Psoas muscle (tissue), 8 donors: ENCODE measurements at regions of chr2 and their contacts with region 1.

Region 1: GRCh38 chr2:241508240-241509154 is at the start of gene STK25:
- DNase-seq: peak; percentile 99
- ATAC-seq: peak; percentile 78 to 86 (median 82)
- H3K4me3 ChIP-seq: peak within 1 kb of the TSS; percentile 85
- H3K27ac ChIP-seq: peak within 1 kb of the TSS; percentile 94
- H3K4me1 ChIP-seq: peaks cover 45% of the 10 kb centered on the region
- H3K27me3 ChIP-seq: no peaks in the 10 kb centered on the region
- CTCF ChIP-seq: no peak
- total RNA-seq, gene STK25: 268 to 382 (median 276) TPM

Region 2: DNA sequence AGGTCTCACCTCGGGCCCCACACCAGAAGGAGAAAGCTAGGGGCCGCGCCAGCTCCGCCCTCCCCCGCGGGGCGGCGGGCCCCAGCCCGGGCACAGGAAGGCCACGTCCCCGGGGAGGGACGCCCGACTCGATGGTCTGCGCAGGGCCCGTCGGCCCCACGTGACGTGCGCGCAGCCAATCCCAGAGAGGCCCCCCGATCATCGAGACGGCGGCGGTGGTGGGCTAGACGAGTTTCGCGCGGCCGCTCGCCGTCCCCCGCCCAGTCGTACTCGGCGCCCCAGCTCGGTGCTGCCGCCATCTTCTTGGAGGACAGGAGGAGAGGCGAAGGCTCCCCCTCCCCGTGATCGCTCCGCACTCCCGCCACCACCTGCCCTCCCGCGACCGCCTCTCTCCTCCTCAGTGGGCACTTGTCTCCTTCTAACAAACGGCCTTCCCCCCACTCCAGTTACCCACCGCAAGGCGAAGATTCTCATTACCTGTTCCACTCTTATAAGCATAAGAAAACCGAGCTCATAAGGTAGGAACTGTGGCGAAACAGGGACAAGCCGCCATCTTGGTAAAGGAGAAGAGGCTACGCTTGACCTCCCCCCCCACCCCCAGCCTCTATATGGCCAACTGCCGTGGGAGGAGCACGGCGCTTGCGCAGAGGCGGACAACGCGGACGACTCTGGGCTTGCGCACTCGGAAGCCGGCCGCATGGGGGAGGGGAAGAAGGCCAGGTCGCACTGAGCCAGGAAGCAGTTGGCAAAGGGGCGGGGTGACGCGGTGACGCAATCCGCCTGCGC is 193.2 kb before region 1 on chr2 and contains the start of gene HDLBP:
- intact Hi-C with region 1: loop called in 1 of 2 experiments (anchors 5 kb)
- DNase-seq: peak; percentile 100
- ATAC-seq: peak; percentile 89 to 91 (median 90)
- H3K4me3 ChIP-seq: peak within 1 kb of the TSS; percentile 85
- H3K27ac ChIP-seq: peak within 1 kb of the TSS; percentile 98
- H3K4me1 ChIP-seq: peaks cover 77% of the 10 kb centered on the region
- H3K27me3 ChIP-seq: no peaks in the 10 kb centered on the region
- CTCF ChIP-seq: no peak
- total RNA-seq, gene HDLBP: 349 to 526 (median 469) TPM

Region 3: DNA sequence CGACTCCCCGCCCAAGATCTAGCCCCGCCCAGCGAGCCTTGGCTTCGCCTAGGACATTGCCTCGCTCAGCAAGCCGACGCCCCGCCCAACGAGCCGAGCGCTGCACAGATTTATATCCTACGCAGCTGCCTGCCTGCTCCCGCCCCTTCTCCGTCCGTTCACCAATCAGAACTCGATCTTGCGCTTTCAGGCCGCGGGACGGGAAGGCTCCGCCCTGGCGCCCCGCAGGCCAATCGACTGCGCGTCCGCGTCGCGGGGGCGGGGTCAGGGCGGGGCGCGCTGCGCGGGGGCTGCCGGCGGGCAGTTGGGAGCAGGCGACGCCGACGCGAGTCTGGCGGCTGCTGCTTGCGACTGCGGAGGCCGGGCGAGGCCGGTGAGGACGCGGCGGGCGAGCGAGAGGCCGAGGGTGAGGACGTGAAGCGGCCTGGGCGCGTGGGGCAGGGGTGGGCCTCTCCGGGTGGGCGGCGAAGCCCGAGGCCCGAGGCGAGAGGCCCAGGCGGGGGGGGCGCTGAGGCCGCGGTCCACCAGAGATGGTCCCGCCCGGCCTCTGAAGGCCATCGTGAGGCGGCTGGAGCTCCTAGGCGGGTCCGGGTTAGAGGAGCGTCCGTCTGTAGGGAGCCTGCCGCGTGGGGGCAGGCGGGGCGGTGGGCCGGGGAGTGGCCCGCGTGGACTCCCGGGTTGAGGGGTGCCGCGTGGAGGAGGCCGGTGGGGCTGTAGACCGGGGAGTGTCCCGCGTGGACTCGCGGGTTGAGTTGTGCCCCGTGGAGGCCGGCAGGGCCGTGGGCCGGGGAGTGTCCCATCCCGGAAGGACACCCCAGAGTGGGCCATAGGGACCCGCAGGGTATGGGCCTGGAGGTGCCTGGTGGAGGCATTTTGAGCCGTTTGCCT is 152.3 kb before region 1 on chr2 and contains the start of gene FARP2:
- intact Hi-C with region 1: loop called in 1 of 2 experiments (anchors 5 kb)
- DNase-seq: peak; percentile 99 to 100
- ATAC-seq: peak; percentile 90 to 93 (median 92)
- H3K4me3 ChIP-seq: peak within 1 kb of the TSS; percentile 75
- H3K27ac ChIP-seq: peak within 1 kb of the TSS; percentile 90
- H3K4me1 ChIP-seq: peaks cover 15% of the 10 kb centered on the region
- H3K27me3 ChIP-seq: no peaks in the 10 kb centered on the region
- CTCF ChIP-seq: no peak
- total RNA-seq, gene FARP2: 17.4 to 18.4 (median 17.7) TPM

Region 4: DNA sequence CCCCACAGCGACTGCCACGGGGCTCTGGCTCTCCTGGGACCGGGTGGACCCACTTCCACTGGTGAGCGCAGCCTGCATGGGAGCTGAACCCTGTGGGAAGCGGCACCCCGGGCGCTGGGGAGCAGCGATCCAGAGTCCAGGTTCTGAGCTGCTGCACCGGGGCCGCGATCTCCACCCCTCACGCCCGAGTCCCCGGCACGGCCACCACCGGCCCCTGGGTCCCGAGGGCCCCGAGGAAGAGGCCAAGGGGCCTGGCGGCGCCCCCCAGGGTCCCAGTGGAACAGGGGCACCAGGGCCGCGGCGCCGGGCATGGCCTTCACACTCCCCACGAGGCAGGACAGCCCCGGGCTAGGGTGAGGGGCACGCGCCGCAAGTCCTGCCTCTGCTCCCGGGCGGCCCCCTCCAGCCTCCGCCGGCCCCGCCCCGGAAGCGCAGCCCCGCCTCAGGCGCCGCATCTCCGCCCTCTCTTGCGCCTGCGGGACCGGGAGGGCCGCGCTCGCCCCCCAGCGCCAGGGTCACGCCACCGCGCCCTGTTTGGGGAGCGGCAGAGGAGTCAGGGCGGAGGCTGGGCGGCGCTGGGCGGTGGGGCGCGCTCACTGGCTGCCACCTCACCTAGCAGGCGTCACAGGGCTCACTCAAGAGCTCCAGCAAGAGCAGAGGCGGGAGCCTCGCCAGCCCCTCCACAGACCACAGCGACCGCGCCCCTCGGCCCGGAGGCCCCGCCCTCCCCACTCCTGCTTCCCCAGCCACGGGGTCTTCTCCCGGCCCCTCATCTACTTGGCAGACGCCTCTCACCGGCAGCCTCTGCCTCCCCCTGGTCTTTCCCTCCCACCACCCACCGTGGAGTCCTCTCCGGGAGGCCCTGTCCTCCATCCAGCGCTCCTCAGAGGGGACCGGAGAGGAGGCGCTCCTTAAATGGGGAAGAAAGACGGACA is 101.6 kb after region 1 on chr2:
- intact Hi-C with region 1: loop called in 1 of 2 experiments (anchors 5 kb)
- DNase-seq: peak; percentile 87 to 93
- ATAC-seq: peak; percentile 96 to 98 (median 96)
- H3K4me3 ChIP-seq: peak overlapping the region; percentile 78
- H3K27ac ChIP-seq: peak overlapping the region; percentile 77
- H3K4me1 ChIP-seq: peaks cover 24% of the 10 kb centered on the region
- H3K27me3 ChIP-seq: no peaks in the 10 kb centered on the region
- CTCF ChIP-seq: peak; percentile 64